Activated CD8-positive, alpha-beta T cell treated with anti-CD3 and anti-CD28 coated beads for 36 hours (primary cell): ENCODE measurements at regions of chr1 and their contacts with region 1.

Region 1: GRCh38 chr1:10679496-10680220 is 116.8 kb downstream of the CASZ1 start:
- DNase-seq: peak; percentile 27
- ATAC-seq: peak; percentile 27
- H3K4me3 Mint-ChIP-seq: no peak overlapping the region
- H3K27ac Mint-ChIP-seq: no peak overlapping the region
- H3K4me1 Mint-ChIP-seq: peaks cover 8% of the 10 kb centered on the region
- H3K27me3 Mint-ChIP-seq: no peaks in the 10 kb centered on the region
- CTCF ChIP-seq: no peak

Region 2: DNA sequence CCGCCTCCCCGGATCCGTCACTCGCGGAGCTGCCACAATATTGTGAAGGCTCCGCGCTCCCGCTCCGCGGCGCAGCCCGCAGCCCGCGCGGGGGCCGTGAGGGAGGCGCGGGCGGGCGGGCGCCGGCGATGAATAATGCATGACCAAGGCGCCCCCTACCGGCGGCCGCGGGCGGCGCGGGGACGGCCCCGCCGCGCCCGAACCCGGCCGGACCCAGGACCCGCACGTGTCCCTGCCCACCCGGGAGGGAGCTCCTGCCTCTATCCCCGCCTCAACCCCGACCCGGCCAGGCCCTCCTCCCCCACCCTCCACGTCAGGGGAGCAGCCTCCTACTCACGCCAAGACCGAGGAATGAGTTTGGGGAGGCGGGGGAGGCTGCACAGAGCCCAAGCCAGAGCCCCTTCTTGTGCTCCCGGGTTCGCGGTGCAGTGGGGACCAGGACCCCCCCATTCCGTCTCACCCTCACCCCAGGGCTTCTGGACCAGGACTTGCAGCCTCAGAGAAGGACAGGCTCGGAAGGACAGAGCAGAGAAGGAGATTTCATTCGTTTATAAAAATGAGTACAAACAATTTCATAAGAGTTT is 187.6 kb after region 1 on chr1:
- CTCF ChIA-PET with region 1: no interaction called
- POLR2A ChIA-PET with region 1: no interaction called
- intact Hi-C with region 1: loop called (anchors 10 kb)
- DNase-seq: peak; percentile 68
- ATAC-seq: peak; percentile 82
- H3K4me3 Mint-ChIP-seq: no peak overlapping the region
- H3K27ac Mint-ChIP-seq: no peak overlapping the region
- H3K4me1 Mint-ChIP-seq: peaks cover 9% of the 10 kb centered on the region
- H3K27me3 Mint-ChIP-seq: peaks cover 56% of the 10 kb centered on the region
- CTCF ChIP-seq: peak; percentile 82